Posterior vena cava (tissue), 2 donors: ENCODE measurements at regions of chr22 and their contacts with region 1.

Region 1: GRCh38 chr22:28829358-28830181 is 29.2 kb upstream of the XBP1 start:
- DNase-seq: peak; percentile 92

Region 2: GRCh38 chr22:28051787-28052356 is 777.7 kb before region 1 on chr22:
- intact Hi-C with region 1: loop called in 1 of 2 experiments (anchors 10 kb)
- DNase-seq: peak; percentile 87

Region 3: DNA sequence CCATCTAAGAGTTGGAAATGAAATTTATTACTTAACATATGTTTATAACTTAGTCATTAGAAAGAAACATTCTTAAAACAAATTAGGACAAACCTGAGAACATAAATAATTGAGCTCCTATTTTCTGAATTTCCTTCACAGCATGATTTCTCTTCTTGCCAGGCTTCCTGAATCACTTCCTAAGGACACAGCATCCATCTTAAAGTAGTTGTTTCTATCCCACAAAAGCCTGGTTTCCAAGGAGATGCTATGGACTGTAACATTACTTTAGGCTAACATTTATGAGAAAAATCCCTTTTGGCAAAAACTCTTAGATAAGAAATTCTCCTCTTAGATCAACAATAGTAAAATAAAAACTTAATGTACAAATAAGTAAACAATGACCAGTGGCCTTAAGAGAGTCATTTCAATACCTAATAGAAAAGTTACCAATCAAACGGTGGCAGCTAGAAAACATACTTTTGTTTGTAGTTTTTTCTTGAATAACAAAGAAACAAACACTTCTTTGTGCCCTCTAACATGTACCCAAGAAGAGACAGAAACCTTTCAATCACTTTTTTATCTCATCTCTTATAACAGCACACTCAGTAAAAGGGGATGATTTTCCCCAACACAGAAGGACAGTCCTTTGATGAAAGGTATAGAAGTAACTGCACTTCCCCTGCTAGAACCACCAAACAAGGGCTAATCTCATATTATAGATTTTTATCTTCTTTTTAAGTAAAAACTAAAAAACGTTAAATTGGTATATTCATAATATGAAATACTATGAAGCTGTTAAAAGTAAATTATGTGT is 224.4 kb before region 1 on chr22:
- intact Hi-C with region 1: loop called in 1 of 2 experiments (anchors 5 kb)
- DNase-seq: no peak